GM10248 (cell line): ENCODE measurements at regions of chr11 and their contacts with region 1.

Region 1: GRCh38 chr11:65213322-65214211 is 31.8 kb downstream of the CAPN1 start:
- DNase-seq: no peak
- CTCF ChIP-seq: no peak

Region 2: DNA sequence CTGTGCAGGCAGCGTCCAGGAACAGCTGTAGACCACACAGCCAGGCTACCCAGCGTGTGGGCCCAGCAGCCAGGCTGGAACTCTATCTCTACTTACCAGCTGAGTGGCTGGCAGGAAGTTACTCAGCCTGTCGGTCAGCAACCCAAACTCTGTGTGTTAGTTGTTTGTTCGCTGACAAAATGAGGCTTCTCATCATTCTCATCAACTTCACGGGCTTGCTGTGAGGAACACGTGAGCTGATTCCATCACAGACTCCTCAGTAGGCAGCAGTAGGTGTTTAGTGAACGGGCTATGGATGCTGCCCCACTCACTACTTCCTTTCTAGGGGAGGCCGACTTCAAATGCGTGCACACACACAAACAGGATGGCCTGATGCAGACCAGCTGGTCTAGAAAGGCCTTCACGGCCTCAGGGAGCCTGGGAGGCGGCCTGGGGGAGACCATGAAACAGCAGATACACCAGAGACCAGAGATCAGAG is 44.4 kb before region 1 on chr11:
- CTCF ChIA-PET with region 1: no interaction called
- POLR2A ChIA-PET with region 1: no interaction called
- DNase-seq: peak; percentile 36
- CTCF ChIP-seq: no peak

Region 3: DNA sequence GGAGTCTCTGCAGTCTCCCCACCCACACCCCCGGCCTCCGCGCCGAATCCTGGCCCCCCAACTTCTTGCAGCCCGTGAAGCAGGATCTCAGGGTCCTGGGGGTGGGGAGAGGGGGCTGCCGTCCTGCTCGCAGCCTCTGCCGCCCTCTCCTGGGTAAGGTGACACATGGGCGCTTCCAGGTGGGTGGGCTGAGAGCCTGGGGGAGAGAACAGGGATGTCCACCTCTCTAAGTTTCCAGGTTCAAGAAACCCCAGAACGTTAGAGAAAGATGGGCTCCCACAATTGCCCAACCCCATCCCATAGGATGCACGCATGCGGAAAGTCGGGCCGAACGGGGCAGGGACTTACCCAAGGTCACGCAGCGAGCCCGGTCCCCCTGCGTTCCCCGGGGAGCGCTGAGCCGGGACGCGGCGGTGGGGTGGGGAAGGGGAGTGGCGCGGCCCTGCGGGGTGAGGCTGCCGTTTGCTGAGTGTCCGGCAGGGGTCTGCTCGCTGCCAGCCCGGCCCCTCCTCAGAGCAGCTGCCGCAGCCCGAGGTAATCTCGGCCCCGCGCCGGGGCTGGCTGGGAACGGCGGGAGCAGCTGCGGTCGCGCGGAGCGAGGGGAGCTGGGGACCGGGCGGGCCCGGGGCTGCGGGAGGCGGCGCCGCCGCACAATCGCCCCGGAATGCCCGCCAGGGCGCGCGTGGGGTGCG is 32.5 kb before region 1 on chr11:
- CTCF ChIA-PET with region 1: no interaction called
- POLR2A ChIA-PET with region 1: no interaction called
- DNase-seq: peak; percentile 78
- CTCF ChIP-seq: peak; percentile 80

Region 4: DNA sequence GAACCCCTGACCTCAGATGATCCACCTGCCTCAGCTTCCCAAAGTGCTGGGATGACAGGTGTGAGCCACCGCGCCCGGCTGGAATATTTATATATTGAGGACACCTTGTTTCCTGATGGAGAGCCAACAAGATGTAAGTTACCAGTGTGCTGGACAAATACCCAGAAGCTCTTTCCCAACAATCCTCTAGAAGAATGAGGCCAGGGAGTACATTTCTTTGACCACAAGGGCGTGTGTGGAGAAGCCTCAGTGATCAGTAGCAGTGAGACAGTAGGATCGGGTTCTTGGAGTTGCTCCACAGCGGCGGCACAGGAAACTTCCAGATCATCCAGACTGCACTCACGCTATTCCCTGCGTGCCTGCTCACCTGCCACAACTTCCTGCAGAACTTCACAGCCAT is 37.9 kb after region 1 on chr11:
- CTCF ChIA-PET with region 1: interaction called, 14 read pairs
- POLR2A ChIA-PET with region 1: no interaction called
- DNase-seq: no peak
- CTCF ChIP-seq: no peak